ENCODE measurements at regions of chr6 and their contacts with region 1.

Region 1: DNA sequence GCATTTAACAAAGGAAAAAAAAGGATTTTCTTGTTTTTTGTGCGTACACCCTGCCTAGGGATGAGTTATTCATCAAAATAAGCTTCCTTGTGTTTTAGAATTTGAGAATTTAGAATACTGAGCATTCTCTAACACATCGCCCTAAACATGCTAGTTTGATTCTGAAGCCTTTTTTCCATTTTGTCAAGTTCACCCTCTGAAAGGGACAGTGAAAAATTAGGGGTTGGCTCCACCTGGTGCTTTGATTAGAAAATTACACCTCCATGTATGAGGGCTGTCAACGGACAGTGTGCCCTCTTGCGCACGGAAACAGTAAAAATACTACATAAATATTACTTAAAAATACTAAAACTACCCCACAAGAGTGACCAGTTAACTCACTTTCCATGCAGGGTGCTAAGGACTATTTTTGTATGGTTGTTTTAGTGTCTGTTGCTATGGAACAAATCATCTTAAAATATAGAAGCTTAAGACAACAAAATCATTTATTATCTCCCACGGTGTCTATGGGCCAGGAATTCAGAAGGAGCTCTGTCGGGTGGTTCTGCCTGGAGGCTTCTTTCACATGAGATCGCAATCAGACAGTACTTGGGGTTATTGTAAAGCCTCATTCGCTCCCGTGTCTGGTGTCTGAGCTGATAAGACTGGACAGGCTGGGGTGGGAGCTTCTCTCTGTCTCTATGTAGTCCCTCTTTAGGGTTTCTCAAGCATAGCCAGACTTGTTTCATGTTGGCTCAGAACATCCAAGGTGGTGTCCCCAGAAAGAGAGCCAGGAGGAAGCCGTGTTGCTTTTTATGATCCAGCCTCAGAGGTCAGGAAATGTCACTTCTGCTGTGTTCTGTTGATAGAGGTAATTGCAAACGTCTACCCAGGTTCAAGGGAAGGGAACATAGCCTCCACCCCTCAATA is 41.1 kb upstream of the TMEM170B start:
- DNase-seq: peak; percentile 60 to 82 (median 73)
- H3K4me3 ChIP-seq: no peak overlapping the region
- H3K27ac ChIP-seq: no peak overlapping the region
- H3K4me1 ChIP-seq: peaks cover 0 to 12% of the 10 kb centered on the region in 2 donors
- H3K27me3 ChIP-seq: no peaks in the 10 kb centered on the region
- CTCF ChIP-seq: peak; percentile 83 to 99 (median 94)
- POLR2A ChIP-seq: no peak

Region 2: DNA sequence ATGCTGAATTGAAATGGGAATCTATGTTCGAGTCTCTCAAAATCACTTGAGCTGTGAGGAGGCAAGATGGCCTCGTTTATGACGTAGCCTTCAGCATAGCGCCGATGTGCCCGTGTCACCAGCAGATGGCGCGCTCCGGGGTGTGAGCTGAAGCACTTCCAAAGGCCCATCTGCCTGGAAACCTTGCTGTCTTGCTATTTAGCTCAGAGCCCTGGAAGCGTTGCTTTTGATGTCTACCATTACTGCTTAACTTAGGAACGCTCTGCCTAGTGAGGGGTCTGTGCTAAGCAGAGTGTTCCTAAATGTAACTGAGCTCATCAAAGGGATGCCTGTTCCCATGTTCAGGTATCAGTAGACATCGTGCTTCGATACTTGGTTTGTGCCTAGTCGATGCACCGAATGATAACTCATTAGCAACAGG is 541.8 kb before region 1 on chr6:
- intact Hi-C with region 1: loop called in 1 of 2 experiments (anchors 10 kb)
- DNase-seq: peak; percentile 63 to 87 (median 76)
- H3K4me3 ChIP-seq: no peak overlapping the region
- H3K27ac ChIP-seq: no peak overlapping the region
- H3K4me1 ChIP-seq: no peaks in the 10 kb centered on the region
- H3K27me3 ChIP-seq: no peaks in the 10 kb centered on the region
- CTCF ChIP-seq: peak; percentile 56 to 73 (median 69)
- POLR2A ChIP-seq: no peak

Region 3: DNA sequence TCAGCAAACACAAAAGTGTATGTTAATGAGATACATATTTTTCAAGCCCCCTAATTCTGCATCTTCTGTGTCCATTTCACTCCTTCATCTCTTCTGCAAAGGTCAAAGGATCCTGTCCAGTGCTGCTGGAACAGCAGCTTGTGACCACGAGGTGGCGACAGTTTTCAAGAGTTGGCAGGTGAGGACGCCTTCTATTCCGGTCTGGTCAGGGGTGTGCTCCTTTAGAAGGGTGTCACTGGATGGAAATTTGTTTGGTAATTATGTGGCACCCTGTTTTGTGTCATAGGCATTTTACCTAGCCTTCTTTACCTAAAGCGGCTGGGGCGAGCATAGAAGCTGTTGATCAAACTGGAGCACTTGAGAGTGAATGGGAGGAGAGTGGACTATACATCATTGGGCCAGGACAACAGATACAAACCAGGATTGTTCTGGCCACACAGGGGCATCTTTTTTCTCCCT is 352.0 kb before region 1 on chr6:
- intact Hi-C with region 1: loop called (anchors 2 to 5 kb)
- DNase-seq: peak; percentile 69 to 88 (median 76)
- H3K4me3 ChIP-seq: no peak overlapping the region
- H3K27ac ChIP-seq: no peak overlapping the region
- H3K4me1 ChIP-seq: peaks cover 0 to 8% of the 10 kb centered on the region in 2 donors
- H3K27me3 ChIP-seq: no peaks in the 10 kb centered on the region
- CTCF ChIP-seq: peak; percentile 70 to 93 (median 86)
- POLR2A ChIP-seq: no peak

Region 4: GRCh38 chr6:11172501-11173332 is 323.7 kb before region 1 on chr6:
- intact Hi-C with region 1: loop called in 1 of 2 experiments (anchors 5 kb)
- DNase-seq: peak; percentile 35 to 82 (median 71)
- H3K4me3 ChIP-seq: no peak overlapping the region
- H3K27ac ChIP-seq: no peak overlapping the region
- H3K4me1 ChIP-seq: peaks cover 0 to 6% of the 10 kb centered on the region in 2 donors
- H3K27me3 ChIP-seq: no peaks in the 10 kb centered on the region
- CTCF ChIP-seq: peak; percentile 72 to 93 (median 82)
- POLR2A ChIP-seq: no peak

Region 5: GRCh38 chr6:11575408-11576033 is 79.1 kb after region 1 on chr6:
- intact Hi-C with region 1: loop called in 1 of 2 experiments (anchors 10 kb)
- DNase-seq: peak; percentile 51 to 86 (median 68)
- H3K4me3 ChIP-seq: peak overlapping the region in 2 of 4 donors; percentile 35 to 50
- H3K27ac ChIP-seq: peak overlapping the region in 1 of 5 donors; percentile 19
- H3K4me1 ChIP-seq: no peaks in the 10 kb centered on the region
- H3K27me3 ChIP-seq: no peaks in the 10 kb centered on the region
- CTCF ChIP-seq: peak; percentile 83 to 95 (median 91)
- POLR2A ChIP-seq: no peak